ENCODE measurements at regions of chr2 and their contacts with region 1.

Region 1: DNA sequence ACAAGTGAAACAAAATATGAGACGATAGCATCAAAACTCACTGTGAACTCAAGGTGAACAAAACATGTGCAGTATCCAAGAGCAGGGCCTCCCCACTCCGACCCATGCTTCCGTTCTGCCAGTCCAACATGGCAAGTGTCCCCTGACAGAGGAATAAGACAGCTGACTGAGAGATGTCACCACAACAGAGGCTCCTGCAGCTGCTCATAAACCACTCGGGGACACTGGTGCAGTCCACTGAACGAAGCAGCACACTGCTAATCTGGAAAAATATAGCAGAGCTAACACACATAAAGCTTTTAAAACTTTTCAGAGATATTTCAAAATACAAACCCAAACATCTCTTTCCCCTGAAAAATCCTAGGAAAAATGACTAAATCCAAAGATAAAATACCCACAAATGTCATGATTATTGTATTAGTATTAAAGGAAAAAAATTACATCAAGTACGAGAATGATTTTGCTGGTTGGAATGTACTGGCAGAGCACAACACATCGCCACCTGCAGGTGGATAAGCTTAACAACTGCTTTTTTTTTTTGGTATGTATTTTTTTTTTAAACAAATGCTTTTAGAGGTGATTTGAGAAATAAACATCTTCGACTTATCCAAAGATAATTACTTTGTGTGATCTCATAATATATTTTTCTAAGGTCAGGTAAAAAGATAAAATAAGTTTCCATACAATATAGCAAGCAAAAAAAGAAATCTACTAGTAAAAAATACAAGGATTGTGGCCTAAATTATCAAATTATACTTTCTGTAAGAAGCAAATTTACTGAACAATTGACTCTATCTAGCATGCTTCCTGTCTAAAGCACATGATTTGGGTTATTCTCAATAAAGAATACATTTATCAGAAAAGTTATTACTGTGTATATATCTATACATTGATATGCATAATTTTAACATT is 18.6 kb downstream of the THADA start:
- DNase-seq: no peak
- ATAC-seq: peak; percentile 50
- H3K4me3 Mint-ChIP-seq: no peak overlapping the region
- H3K27ac Mint-ChIP-seq: no peak overlapping the region
- H3K4me1 Mint-ChIP-seq: no peaks in the 10 kb centered on the region
- H3K27me3 Mint-ChIP-seq: no peaks in the 10 kb centered on the region
- CTCF ChIP-seq: no peak

Region 2: DNA sequence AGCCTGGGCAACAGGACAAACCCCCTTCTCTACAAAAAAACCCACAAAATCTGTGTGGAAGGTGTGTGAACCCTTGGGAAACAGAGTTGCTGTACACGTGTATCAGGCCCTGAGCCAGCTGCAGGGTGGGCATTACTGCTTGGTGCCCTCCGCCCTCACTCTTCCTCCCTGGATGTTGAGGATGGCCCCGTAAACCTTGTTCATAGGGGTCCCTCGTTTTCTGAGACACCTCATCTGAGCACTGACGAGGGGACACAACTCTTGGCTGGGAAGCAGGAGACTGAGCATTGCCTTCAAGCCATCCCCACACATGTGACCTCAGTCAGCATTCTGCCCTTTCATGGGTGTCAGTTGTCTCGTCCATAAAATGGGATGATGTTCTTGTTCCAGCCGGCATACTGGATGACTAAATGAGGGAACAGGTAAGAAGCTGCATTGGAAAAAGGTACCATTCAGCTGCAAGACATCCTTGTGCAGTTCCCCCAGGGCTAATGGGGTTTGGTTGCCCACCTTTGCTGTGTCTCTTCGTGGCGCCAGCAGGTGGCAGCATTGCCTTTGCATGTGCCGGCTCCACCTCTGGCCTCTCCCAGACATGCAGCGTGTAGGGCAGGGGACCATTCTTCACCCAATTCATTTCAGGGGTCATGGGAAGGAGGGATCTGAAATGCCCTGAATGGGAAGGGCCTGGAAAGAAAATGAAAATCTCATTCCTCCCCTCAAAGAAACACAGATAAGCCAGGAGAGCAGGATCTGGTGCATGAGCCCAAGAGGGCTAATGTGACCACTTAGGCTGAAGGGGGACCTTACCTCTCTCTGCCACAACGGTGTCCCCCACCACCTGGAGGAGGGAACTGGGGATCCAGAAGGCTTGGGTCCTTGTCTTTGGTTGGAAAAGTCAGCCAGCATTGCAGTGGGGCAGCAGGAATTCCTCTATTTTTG is 748.5 kb before region 1 on chr2:
- CTCF ChIA-PET with region 1: interaction called, 15 read pairs
- POLR2A ChIA-PET with region 1: no interaction called
- intact Hi-C with region 1: loop called (anchors 1 kb)
- DNase-seq: peak; percentile 52
- ATAC-seq: peak; percentile 88
- H3K4me3 Mint-ChIP-seq: no peak overlapping the region
- H3K27ac Mint-ChIP-seq: no peak overlapping the region
- H3K4me1 Mint-ChIP-seq: peaks cover 14% of the 10 kb centered on the region
- H3K27me3 Mint-ChIP-seq: no peaks in the 10 kb centered on the region
- CTCF ChIP-seq: peak; percentile 65

Region 3: DNA sequence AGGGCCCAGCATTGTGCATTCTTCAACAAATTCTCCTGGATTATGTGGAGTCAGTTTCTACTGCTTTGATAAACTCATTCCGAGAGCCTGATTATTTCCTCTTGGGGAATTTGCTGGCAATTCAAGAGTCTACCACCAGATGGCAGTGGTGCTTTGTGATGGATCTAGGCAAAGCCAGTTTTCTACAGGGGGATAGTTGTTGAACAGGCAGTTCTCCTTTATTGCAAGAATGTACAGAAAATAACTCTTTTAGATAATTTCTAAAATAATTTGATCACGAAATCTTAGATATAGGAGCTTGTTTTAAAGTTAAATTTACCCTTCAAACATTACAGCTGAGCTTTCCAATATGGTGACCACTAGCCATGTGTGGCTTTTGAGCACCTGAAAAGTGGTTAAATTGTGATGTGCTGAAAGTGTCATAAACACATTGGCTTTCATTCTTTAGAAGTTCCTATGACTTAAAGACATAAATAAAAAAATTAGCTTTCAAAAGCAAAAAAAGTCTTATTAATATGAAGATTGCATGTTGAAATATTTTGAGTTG is 718.2 kb before region 1 on chr2:
- CTCF ChIA-PET with region 1: interaction called, 14 read pairs
- POLR2A ChIA-PET with region 1: no interaction called
- intact Hi-C with region 1: loop called (anchors 1 kb)
- DNase-seq: no peak
- ATAC-seq: no peak
- H3K4me3 Mint-ChIP-seq: no peak overlapping the region
- H3K27ac Mint-ChIP-seq: no peak overlapping the region
- H3K4me1 Mint-ChIP-seq: no peaks in the 10 kb centered on the region
- H3K27me3 Mint-ChIP-seq: no peaks in the 10 kb centered on the region
- CTCF ChIP-seq: peak; percentile 42

Region 4: GRCh38 chr2:42944779-42945415 is 632.3 kb before region 1 on chr2:
- CTCF ChIA-PET with region 1: interaction called, 24 read pairs
- POLR2A ChIA-PET with region 1: no interaction called
- intact Hi-C with region 1: loop called (anchors 1 kb)
- DNase-seq: no peak
- ATAC-seq: no peak
- H3K4me3 Mint-ChIP-seq: no peak overlapping the region
- H3K27ac Mint-ChIP-seq: no peak overlapping the region
- H3K4me1 Mint-ChIP-seq: peaks cover 32% of the 10 kb centered on the region
- H3K27me3 Mint-ChIP-seq: no peaks in the 10 kb centered on the region
- CTCF ChIP-seq: no peak

Region 5: DNA sequence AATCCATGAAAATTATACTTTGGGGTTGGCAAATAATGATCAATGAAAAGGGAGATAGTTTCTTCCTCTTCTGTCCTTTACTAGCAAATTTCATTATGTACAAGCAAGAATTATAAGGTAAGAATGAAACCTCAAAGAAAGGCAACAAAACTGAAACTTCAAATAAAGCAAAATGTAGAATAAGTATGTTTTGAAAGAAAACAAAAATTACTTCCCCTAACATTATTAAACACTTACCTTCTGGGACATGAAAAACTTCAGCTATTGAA is 10.8 kb before region 1 on chr2:
- CTCF ChIA-PET with region 1: interaction called, 20 read pairs
- POLR2A ChIA-PET with region 1: no interaction called
- intact Hi-C with region 1: no loop called
- DNase-seq: no peak
- ATAC-seq: peak; percentile 58
- H3K4me3 Mint-ChIP-seq: peak overlapping the region; percentile 47
- H3K27ac Mint-ChIP-seq: peak overlapping the region; percentile 76
- H3K4me1 Mint-ChIP-seq: peaks cover 26% of the 10 kb centered on the region
- H3K27me3 Mint-ChIP-seq: no peaks in the 10 kb centered on the region
- CTCF ChIP-seq: no peak